Astrocyte of the cerebellum (primary cell): ENCODE measurements at regions of chr6 and their contacts with region 1.

Region 1: GRCh38 chr6:8006208-8006607 is 58.0 kb downstream of the BLOC1S5 start:
- DNase-seq: peak; percentile 28
- H3K4me3 ChIP-seq: no peak overlapping the region
- CTCF ChIP-seq: peak; percentile 45

Region 2: DNA sequence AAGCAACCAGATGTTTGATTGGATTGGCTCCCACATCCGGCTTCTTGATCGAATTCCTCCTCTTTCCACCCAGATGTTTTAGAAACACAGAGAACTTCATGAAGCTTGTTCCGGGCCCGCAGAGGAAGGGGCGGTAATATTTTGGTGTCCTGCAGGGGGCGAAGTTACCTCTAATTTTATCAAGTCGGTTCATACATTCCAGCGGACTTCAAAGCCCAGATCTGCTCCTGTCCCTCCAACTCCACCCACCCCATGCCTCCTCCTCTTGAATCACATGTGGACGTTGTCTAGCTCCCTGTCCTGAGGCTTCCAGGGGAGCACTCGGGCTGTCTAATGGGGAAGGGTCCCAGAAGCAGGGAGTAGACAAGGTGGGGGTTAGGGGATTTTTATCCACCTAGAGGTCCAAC is 283.2 kb before region 1 on chr6:
- in situ Hi-C with region 1: loop called (anchors 5 kb)
- DNase-seq: peak; percentile 68
- H3K4me3 ChIP-seq: no peak overlapping the region
- CTCF ChIP-seq: peak; percentile 60

Region 3: DNA sequence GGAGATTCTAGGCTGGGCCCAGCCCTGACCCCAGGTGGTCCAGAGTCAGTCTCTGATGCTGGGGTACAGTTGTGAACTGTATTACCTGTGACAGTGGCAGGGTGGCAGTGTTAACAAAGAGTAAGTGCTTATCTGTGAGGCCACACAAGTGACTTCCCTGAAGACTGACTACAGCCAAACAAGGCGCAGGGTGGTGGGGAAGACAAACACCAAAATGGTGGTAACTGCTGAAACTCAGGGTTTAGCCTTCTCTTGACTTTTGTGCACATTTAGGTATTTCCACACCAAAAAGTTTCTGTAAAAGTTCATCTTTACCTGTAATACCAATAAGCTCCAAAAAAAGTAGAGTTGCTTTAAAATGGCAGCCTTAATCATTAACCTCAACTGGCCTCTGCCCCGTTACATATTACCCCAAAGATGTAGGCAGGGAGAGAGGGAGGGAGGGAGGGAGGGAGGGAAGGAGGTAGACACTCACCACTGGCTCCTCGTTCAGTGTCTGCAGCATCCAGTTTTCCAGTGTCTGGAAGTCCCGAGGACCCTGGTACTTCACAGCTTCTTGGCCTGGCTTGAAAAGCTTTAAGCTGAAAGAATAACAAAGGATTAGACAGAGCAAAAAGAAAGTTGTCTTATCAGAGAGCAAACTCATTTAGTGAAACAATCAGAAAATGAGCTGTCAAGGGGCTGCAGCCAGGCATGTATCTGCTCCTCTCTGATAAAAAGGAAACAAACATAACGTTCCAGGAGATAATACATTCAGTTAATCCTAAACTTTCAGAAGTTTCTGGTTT is 106.9 kb before region 1 on chr6:
- in situ Hi-C with region 1: no loop called
- DNase-seq: no peak
- H3K4me3 ChIP-seq: no peak overlapping the region
- CTCF ChIP-seq: no peak